ENCODE measurements at regions of chr3 and their contacts with region 1.

Region 1: DNA sequence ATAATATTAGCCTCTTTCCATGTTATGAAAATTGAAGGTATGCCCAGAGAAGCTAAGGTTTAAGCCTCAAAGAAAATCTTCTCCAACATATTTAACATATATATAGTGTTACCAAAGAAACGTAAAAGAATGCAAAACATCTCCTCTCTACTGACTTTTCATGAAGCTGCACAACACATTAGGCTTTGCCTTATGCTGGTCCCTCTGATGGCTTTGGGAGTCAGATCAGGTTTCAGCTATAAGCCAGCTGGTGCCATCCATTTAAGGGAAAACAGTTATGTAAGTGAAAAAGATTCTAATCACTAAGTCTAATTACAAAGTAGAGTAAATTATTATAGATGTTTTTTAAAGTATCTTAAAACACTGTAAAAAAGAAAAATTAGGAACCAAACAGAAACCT is 410.5 kb downstream of the LSAMP start:
- DNase-seq: no peak
- H3K4me3 ChIP-seq: no peak overlapping the region
- H3K27ac ChIP-seq: no peak overlapping the region
- H3K4me1 ChIP-seq: peaks cover 0 to 6% (median 1%) of the 10 kb centered on the region in 4 experiments; a peak in 1 of 7 replicates
- H3K27me3 ChIP-seq: no peaks in the 10 kb centered on the region
- CTCF ChIP-seq: no peak
- EP300 ChIP-seq: no peak
- POLR2A ChIP-seq: no peak
- RAD21 ChIP-seq: no peak

Region 2: GRCh38 chr3:116020495-116020894 is 14.3 kb before region 1 on chr3:
- CTCF ChIA-PET with region 1: interaction called, 22 read pairs
- POLR2A ChIA-PET with region 1: no interaction called
- DNase-seq: no peak
- H3K4me3 ChIP-seq: no peak overlapping the region
- H3K27ac ChIP-seq: no peak overlapping the region
- H3K4me1 ChIP-seq: no peaks in the 10 kb centered on the region
- H3K27me3 ChIP-seq: no peaks in the 10 kb centered on the region
- CTCF ChIP-seq: no peak
- EP300 ChIP-seq: no peak
- POLR2A ChIP-seq: no peak
- RAD21 ChIP-seq: no peak

Measured in H1 (cell line).